ENCODE measurements at regions of chr1 and their contacts with region 1.

Region 1: GRCh38 chr1:150162862-150163706 is 13.4 kb downstream of the PLEKHO1 start:
- DNase-seq: no peak
- H3K4me3 ChIP-seq: no peak overlapping the region
- H3K27ac ChIP-seq: no peak overlapping the region
- H3K4me1 ChIP-seq: no peaks in the 10 kb centered on the region
- H3K27me3 ChIP-seq: no peaks in the 10 kb centered on the region
- CTCF ChIP-seq: no peak

Region 2: GRCh38 chr1:149962123-149962548 is 200.9 kb before region 1 on chr1:
- CTCF ChIA-PET with region 1: no interaction called
- POLR2A ChIA-PET with region 1: no interaction called
- intact Hi-C with region 1: loop called (anchors 1 kb)
- DNase-seq: peak; percentile 44 to 69
- H3K4me3 ChIP-seq: no peak overlapping the region
- H3K27ac ChIP-seq: peak overlapping the region; percentile 52
- H3K4me1 ChIP-seq: peaks cover 7% of the 10 kb centered on the region
- H3K27me3 ChIP-seq: no peaks in the 10 kb centered on the region
- CTCF ChIP-seq: peak; percentile 83

Region 3: GRCh38 chr1:149995951-149996350 is 167.1 kb before region 1 on chr1:
- CTCF ChIA-PET with region 1: no interaction called
- POLR2A ChIA-PET with region 1: no interaction called
- intact Hi-C with region 1: no loop called
- DNase-seq: peak; percentile 20 to 85
- H3K4me3 ChIP-seq: no peak overlapping the region
- H3K27ac ChIP-seq: peak overlapping the region; percentile 64
- H3K4me1 ChIP-seq: peaks cover 28% of the 10 kb centered on the region
- H3K27me3 ChIP-seq: no peaks in the 10 kb centered on the region
- CTCF ChIP-seq: no peak

Measured in PC-9 (cell line).